ENCODE measurements at regions of chr3 and their contacts with region 1.

Region 1: GRCh38 chr3:4978204-4978965 is 852 bp upstream of the BHLHE40 start:
- DNase-seq: peak; percentile 98
- H3K4me3 Mint-ChIP-seq: peak overlapping the region; percentile 76
- H3K27ac Mint-ChIP-seq: peak overlapping the region; percentile 96
- H3K4me1 Mint-ChIP-seq: peaks cover 12% of the 10 kb centered on the region
- H3K27me3 Mint-ChIP-seq: no peaks in the 10 kb centered on the region
- CTCF ChIP-seq: no peak

Region 2: GRCh38 chr3:4712143-4712542 is 266.2 kb before region 1 on chr3:
- CTCF ChIA-PET with region 1: interaction called, 31 read pairs
- intact Hi-C with region 1: no loop called
- DNase-seq: peak; percentile 44
- H3K4me3 Mint-ChIP-seq: no peak overlapping the region
- H3K27ac Mint-ChIP-seq: no peak overlapping the region
- H3K4me1 Mint-ChIP-seq: peaks cover 16% of the 10 kb centered on the region
- H3K27me3 Mint-ChIP-seq: no peaks in the 10 kb centered on the region
- CTCF ChIP-seq: no peak

Region 3: DNA sequence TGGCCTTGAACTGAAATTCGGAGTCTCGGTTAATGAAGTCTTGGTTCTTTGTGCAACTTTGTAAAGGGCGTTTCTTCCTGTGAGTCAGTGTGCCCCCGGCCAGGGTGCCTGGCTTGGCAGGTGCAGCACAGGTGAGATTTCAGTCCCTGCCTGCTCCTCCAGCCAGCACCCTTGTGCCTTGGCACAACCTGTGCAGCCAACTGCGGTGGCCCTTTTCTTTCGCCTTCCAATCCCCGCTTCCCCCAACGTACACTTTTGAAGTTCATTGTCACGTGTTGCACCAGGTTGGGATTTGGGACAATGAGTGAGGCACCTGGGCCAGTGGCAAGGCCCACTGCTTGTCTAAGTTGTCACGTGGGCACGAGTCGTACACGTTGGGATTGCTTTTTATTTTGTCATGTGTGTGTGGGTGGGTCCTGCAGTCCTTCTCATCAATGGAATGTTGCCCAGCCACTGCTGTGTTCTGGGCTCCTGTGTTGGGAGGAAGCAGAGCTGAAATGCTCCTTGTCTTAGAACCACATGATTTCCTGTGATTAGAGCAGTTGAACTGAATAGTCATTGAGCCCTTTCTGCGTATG is 242.0 kb before region 1 on chr3:
- CTCF ChIA-PET with region 1: interaction called, 4 read pairs
- intact Hi-C with region 1: loop called (anchors 5 kb)
- DNase-seq: peak; percentile 86
- H3K4me3 Mint-ChIP-seq: peak overlapping the region; percentile 58
- H3K27ac Mint-ChIP-seq: peak overlapping the region; percentile 92
- H3K4me1 Mint-ChIP-seq: peaks cover 63% of the 10 kb centered on the region
- H3K27me3 Mint-ChIP-seq: no peaks in the 10 kb centered on the region
- CTCF ChIP-seq: no peak

Region 4: GRCh38 chr3:4826237-4827100 is 151.9 kb before region 1 on chr3:
- CTCF ChIA-PET with region 1: no interaction called
- intact Hi-C with region 1: loop called (anchors 2 kb)
- DNase-seq: peak; percentile 48
- H3K4me3 Mint-ChIP-seq: peak overlapping the region; percentile 39
- H3K27ac Mint-ChIP-seq: peak overlapping the region; percentile 65
- H3K4me1 Mint-ChIP-seq: peaks cover 57% of the 10 kb centered on the region
- H3K27me3 Mint-ChIP-seq: no peaks in the 10 kb centered on the region
- CTCF ChIP-seq: no peak

Region 5: DNA sequence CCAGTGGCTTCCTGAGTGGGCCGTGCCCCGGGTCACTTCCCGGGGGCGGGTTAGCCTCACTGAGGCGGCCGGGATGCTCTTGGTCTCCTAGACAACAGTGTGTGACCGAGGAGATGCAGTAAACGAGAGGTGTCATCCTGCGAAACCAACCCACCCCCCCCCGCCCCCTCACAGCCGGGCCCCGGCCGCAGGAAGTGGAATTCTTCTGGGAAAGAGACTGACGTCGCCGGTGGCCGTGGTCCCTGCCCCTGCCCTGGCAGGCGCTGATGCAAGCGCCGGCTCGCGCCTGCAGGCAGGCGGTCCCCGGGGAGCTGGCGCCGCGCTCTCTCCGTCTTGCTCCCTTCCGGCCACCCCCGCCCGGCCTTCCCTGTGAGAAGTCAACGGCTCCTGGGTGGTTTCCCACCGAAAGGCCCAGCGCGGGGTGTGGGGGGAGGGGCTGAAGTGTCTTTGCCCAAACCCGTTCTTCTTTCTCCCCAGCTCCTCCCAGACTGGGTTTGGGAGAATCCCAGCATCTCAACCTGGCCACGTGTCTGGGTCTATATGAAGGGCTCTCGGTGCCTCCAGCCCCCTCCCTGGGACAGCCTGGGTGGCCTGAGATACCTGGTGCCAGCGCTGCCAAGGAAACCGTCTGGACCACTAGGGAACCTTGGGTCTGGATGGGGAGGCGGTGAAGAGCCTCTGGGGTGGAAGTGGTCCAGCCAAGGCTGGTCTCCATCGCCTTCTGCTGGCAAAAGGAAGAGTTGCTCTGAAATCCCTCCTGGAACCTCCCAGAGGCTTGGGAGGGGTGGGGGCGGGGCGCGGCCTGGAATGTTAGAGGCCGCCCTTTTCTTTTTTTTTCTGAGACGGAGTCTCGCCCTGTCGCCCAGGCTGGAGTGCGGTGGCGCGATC is 48.2 kb after region 1 on chr3:
- CTCF ChIA-PET with region 1: interaction called, 9 read pairs
- intact Hi-C with region 1: loop called (anchors 1 kb)
- DNase-seq: peak; percentile 84
- H3K4me3 Mint-ChIP-seq: peak overlapping the region; percentile 69
- H3K27ac Mint-ChIP-seq: peak overlapping the region; percentile 96
- H3K4me1 Mint-ChIP-seq: peaks cover 28% of the 10 kb centered on the region
- H3K27me3 Mint-ChIP-seq: no peaks in the 10 kb centered on the region
- CTCF ChIP-seq: no peak

Region 6: DNA sequence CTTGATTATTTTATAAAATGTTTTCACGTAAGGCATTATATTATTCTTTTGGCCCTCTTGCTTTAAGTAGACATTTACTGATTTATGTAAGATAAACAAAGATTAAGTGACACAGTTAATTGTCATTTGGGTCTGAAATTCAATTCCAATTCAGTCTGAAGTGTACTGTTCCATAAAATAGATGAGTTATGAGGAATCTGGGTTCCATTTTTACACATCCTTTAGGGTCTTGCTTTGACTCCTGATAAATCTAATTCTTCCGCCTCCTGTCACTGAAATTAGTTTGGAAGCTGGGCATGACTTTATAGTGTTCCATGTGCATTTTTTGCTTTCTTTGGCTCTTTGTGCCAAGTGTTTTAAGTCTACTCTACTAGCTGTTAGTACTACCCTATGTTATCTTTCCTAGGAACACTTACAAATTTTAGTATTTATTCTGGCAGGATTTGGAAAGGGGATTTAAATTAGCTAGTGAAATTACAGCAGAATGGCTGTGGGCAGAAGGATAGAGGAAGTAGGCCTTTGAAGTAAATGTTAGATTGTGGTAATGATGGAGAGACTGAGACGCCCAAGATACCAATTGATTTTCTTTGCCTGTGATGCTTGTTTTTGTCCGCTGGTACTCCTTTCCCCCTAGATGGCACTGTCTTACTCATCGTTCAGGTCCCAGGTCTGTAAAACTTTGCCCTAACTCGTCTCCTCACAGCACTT is 158.0 kb after region 1 on chr3:
- CTCF ChIA-PET with region 1: no interaction called
- intact Hi-C with region 1: no loop called
- DNase-seq: no peak
- H3K4me3 Mint-ChIP-seq: no peak overlapping the region
- H3K27ac Mint-ChIP-seq: no peak overlapping the region
- H3K4me1 Mint-ChIP-seq: peaks cover 39% of the 10 kb centered on the region
- H3K27me3 Mint-ChIP-seq: no peaks in the 10 kb centered on the region
- CTCF ChIP-seq: no peak